IMR-90 (cell line): ENCODE measurements at regions of chr7 and their contacts with region 1.

Region 1: DNA sequence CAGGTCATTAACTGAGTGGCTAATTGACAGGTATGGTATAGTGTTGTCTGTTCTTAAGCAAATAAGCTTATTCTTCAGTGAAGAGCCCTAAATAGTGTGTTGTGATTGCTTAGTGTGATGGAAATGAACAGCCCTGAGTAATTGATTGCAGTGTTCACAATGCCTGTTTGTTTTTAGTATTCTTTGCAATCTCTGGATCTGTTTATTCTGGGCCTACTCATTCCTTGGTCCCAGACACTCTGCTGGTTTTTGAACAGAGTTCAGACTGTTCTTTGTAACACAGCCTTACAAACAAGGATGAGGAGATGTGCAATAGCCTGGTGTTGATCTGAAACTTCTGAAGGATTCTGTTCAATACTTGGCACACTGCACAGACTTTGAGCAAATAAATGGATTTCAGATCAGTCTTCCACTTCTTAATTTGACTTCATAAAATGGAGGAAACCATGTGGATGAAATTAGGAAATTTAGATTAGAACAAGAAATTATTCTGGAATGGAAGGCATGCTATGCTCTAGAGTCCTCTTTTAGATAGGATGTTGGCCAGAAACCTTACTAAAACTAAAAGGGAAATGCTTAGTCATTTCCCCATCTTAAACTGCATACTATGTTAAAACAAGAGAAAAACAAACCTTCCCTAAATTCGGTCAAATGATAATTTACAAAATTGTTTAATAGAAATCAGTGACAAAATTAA is 444.2 kb upstream of the SEMA3D start:
- DNase-seq: peak; percentile 4
- ATAC-seq: peak; percentile 74
- H3K4me3 ChIP-seq: no peak overlapping the region
- H3K27ac ChIP-seq: no peak overlapping the region
- H3K4me1 ChIP-seq: no peaks in the 10 kb centered on the region
- H3K27me3 ChIP-seq: no peaks in the 10 kb centered on the region
- CTCF ChIP-seq: no peak
- POLR2A ChIP-seq: no peak
- RAD21 ChIP-seq: no peak

Region 2: GRCh38 chr7:84446991-84447480 is 1184.0 kb before region 1 on chr7:
- CTCF ChIA-PET with region 1: no interaction called
- POLR2A ChIA-PET with region 1: interaction called, 13 read pairs
- dilution Hi-C with region 1: no loop called
- in situ Hi-C with region 1: no loop called
- intact Hi-C with region 1: no loop called
- DNase-seq: no peak
- ATAC-seq: no peak
- H3K4me3 ChIP-seq: no peak overlapping the region
- H3K27ac ChIP-seq: no peak overlapping the region
- H3K4me1 ChIP-seq: no peaks in the 10 kb centered on the region
- H3K27me3 ChIP-seq: no peaks in the 10 kb centered on the region
- CTCF ChIP-seq: no peak
- POLR2A ChIP-seq: no peak
- RAD21 ChIP-seq: no peak

Region 3: DNA sequence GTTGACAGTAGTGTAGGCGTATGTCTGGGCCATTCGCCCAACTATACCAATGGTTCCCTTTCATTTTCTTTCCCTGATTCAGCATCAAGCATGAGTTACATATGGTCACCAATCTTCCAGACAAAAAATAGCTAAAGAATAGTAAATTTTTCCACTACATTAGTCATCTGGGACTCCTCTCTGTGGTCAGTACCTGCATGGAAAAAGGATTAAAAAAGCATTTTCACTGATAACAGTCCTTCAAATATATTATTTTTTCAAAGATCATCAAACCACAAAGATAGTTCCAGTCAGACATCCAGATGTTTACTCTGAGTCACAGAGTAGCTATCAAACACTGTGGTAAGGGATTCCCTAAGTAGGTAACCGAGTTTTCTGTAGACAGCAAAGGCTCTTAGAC is 141.6 kb before region 1 on chr7:
- CTCF ChIA-PET with region 1: no interaction called
- POLR2A ChIA-PET with region 1: no interaction called
- dilution Hi-C with region 1: no loop called
- in situ Hi-C with region 1: no loop called
- intact Hi-C with region 1: no loop called
- DNase-seq: peak; percentile 95
- ATAC-seq: peak; percentile 93
- H3K4me3 ChIP-seq: no peak overlapping the region
- H3K27ac ChIP-seq: no peak overlapping the region; the same call in 1 of the 2 replicates
- H3K4me1 ChIP-seq: no peaks in the 10 kb centered on the region
- H3K27me3 ChIP-seq: no peaks in the 10 kb centered on the region
- CTCF ChIP-seq: no peak
- POLR2A ChIP-seq: no peak
- RAD21 ChIP-seq: no peak

Region 4: DNA sequence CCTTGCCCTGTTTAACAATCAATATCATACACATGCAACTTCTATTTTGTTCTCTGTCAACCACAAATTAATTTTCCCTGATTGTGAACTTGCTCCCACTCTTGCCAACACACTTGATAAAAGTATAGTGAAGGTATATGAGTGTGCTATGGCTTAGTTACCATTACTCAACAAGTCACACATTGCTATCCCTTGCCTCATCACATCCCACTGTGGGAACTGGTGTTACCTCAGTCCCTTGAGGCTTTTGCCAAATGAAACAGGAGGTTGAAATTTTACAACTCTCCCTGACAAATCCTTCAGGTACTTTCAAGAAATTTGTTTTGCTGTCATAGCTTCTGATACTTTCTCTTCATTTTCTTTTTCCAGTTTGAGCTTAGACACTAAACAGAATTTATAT is 28.3 kb after region 1 on chr7:
- CTCF ChIA-PET with region 1: no interaction called
- POLR2A ChIA-PET with region 1: no interaction called
- dilution Hi-C with region 1: no loop called
- in situ Hi-C with region 1: no loop called
- intact Hi-C with region 1: no loop called
- DNase-seq: peak; percentile 5
- ATAC-seq: no peak
- H3K4me3 ChIP-seq: no peak overlapping the region
- H3K27ac ChIP-seq: no peak overlapping the region
- H3K4me1 ChIP-seq: no peaks in the 10 kb centered on the region
- H3K27me3 ChIP-seq: no peaks in the 10 kb centered on the region
- CTCF ChIP-seq: no peak
- POLR2A ChIP-seq: no peak
- RAD21 ChIP-seq: no peak

Region 5: GRCh38 chr7:85730012-85730411 is 99.0 kb after region 1 on chr7:
- CTCF ChIA-PET with region 1: no interaction called
- POLR2A ChIA-PET with region 1: no interaction called
- dilution Hi-C with region 1: no loop called
- in situ Hi-C with region 1: no loop called
- intact Hi-C with region 1: no loop called
- DNase-seq: no peak
- ATAC-seq: no peak
- H3K4me3 ChIP-seq: no peak overlapping the region
- H3K27ac ChIP-seq: no peak overlapping the region
- H3K4me1 ChIP-seq: no peaks in the 10 kb centered on the region
- H3K27me3 ChIP-seq: no peaks in the 10 kb centered on the region
- CTCF ChIP-seq: no peak
- POLR2A ChIP-seq: no peak
- RAD21 ChIP-seq: no peak